GM10248 (cell line): ENCODE measurements at regions of chr12 and their contacts with region 1.

Region 1: DNA sequence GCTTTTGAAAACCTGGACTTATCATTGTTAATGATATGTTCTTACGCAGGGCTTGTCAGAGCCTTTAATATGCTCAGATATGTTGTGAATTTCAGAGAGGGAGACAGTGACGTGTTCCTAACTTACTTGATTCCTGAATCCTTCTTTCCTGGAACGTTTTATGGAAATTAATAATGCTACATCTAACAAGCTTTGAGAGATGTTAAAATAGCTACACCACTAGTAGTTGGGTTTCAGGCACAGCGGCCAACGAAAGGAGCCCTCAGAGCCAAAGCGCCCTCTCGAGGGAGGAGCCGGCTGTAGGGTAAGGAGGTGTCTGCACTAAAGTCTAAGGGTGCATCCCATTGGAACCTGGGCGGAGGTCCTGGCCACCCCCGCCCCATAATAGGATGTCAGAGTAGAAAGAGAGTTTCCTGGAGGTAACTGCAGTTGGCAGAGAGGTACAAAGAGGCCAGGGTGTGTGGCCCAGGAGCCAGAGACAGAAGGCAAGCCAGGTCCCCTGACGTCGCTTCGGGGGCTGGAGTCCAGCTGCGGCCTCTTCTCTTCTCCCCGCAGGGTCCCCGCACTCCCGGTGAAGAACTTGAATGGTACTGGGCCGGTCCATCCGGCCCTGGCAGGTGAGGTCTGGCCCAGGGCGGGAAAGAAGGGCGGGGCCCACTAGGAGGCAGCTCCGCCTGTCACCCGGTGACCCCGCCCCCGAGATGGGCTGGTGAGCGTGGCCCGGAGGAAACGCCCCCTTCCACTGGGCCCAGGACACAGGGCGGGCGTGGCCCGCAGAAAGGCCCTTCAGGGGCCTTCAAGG is 36.3 kb downstream of the DTX1 start:
- DNase-seq: peak; percentile 67
- CTCF ChIP-seq: peak; percentile 63

Region 2: DNA sequence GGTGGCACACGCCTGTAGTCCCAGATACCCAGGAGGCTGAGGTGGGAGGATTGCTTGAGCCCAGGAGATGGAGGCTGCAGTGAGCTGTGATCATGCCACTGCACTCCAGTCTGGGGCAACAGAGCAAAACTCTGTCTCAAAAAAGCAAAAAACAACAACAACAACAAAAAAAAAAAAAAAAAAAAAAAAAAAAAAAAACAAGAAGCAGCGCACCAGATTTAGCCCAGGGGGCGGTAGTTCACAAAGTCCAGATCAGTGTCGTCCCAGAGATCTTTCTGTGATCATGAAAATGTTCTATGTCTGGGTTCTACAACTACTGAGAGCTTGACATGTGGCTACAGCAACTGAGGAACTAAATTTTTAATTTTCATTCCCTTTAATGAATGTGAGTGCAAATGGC is 87.1 kb before region 1 on chr12:
- CTCF ChIA-PET with region 1: no interaction called
- POLR2A ChIA-PET with region 1: no interaction called
- DNase-seq: no peak
- CTCF ChIP-seq: no peak

Region 3: GRCh38 chr12:113048716-113049127 is 44.1 kb before region 1 on chr12:
- CTCF ChIA-PET with region 1: interaction called, 107 read pairs
- POLR2A ChIA-PET with region 1: no interaction called
- DNase-seq: peak; percentile 76
- CTCF ChIP-seq: peak; percentile 57

Region 4: GRCh38 chr12:113056631-113057488 is 35.9 kb before region 1 on chr12 and contains the start of gene DTX1:
- CTCF ChIA-PET with region 1: interaction called, 107 read pairs
- POLR2A ChIA-PET with region 1: no interaction called
- DNase-seq: peak; percentile 31
- CTCF ChIP-seq: no peak

Region 5: GRCh38 chr12:113065126-113066007 is 27.4 kb before region 1 on chr12:
- CTCF ChIA-PET with region 1: interaction called, 62 read pairs
- POLR2A ChIA-PET with region 1: interaction called, 6 read pairs
- DNase-seq: peak; percentile 67
- CTCF ChIP-seq: no peak

Region 6: GRCh38 chr12:113075137-113075683 is 17.6 kb before region 1 on chr12:
- CTCF ChIA-PET with region 1: interaction called, 62 read pairs
- POLR2A ChIA-PET with region 1: interaction called, 7 read pairs
- DNase-seq: peak; percentile 84
- CTCF ChIP-seq: no peak

Region 7: DNA sequence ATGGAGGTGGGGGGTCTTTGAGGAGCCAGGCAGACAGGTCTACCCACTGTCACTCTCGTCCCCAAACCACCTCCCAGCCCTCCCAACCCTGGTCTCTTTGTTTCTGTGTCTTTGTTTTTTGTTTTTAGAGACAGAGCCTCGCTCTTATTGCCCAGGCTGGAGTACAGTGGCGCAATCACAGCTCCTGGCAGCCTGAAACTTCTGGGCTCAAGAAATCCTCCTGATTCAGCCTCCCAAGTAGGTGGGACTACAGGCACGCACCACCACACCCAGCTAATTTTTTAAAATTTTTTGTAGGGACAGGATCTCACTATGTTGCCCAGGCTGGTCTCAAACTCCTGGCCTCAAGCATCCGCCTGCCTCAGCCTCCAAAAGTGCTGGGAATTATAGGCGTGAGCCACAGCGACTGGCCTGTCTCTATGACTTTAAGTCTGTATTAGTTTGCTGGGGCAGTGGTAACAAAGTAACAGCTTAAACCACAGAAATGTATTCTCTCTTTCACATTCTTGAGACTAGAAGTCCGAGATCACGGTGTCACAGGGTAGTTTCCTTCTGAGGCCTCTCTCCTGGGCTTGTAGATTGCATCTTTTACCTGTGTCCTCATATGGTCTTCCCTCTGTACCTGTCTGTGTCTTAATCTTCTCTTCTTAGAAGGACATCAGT is 10.2 kb before region 1 on chr12:
- CTCF ChIA-PET with region 1: interaction called, 16 read pairs
- POLR2A ChIA-PET with region 1: no interaction called
- DNase-seq: peak; percentile 62
- CTCF ChIP-seq: no peak